Activated naive CD8-positive, alpha-beta T cell treated with anti-CD3 and anti-CD28 coated beads, Interleukin-2, amount 10 ng/mL, durations not matched to agents 7 days and 5 days (primary cell): ENCODE measurements at regions of chr12 and their contacts with region 1.

Region 1: DNA sequence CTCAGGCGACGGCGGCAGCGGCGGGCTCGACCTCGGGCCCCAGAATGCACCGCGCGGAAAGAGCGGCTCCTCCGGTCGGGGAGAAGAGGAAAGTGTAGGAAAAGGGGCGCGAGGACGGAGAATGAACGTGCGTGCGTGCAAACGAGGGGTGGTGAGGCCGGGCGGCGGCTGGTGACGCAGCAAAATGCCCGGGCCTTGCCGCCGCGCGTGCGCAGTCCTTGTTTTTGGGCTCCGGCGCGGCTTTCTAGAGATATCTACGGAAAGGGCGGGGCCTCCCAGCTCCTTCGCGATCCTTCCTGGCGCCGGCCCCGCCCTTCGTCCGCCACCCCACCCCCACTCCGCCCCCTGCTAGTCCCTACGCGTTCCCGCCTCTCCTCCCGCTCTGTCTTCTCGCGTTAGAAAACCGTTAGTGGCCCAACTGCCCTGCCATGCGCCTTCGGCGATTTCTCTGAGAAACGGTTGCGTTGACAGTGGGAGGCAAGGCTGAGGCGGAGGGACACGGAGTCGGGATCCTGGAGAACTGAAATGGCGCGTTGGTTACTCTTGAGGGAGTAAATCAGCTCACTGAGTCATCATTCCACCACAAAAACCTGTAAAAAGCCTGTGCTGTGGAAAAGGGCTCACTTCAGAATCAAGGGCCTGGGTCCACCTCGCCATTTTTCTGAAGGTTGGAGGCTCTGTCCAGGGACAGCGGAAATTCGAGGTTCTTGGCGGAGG is at the start of gene PTGES3:
- DNase-seq: peak; percentile 99
- ATAC-seq: peak; percentile 75
- H3K4me3 Mint-ChIP-seq: peak within 1 kb of the TSS; percentile 100
- H3K27ac Mint-ChIP-seq: peak within 1 kb of the TSS; percentile 98
- H3K4me1 Mint-ChIP-seq: peaks cover 23% of the 10 kb centered on the region
- H3K27me3 Mint-ChIP-seq: no peaks in the 10 kb centered on the region
- total RNA-seq, gene PTGES3: 210 to 217 TPM

Region 2: DNA sequence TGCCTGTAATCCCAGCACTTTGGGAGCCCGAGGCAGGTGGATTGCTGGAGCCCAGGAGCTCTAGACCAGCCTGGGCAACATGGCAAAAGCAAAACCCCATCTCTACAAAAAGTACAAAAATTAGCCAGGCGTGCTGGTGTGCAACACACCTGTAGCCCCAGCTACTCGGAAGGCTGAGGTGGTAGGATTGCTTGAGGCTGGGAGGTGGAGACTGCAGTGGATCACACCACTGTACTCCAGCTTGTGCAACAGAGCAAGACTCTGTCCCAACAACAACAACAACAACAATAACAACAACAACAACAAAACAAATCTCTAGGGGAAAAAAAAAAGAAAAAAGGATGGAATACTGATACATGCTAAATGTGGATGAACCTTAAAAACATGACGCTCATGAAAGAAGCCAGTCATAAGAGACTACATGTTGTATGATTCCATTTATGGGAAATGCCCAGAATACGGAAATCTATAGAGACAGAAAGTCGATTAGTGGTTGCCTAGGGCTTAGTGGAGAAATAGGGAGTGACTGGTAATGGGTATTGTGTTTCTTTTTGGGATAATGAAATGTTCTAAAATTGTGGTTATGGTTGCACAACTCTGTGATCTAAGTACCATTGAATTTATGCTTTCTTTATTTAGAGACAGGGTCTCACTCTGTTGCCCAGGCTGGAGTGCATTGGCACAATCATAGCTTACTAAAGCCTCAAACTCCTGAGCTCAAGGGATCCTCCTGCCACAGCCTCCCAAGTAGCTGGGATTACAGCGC is 158.8 kb before region 1 on chr12:
- POLR2A ChIA-PET with region 1: no interaction called
- DNase-seq: no peak
- ATAC-seq: no peak
- H3K4me3 Mint-ChIP-seq: no peak overlapping the region
- H3K27ac Mint-ChIP-seq: no peak overlapping the region
- H3K4me1 Mint-ChIP-seq: no peaks in the 10 kb centered on the region
- H3K27me3 Mint-ChIP-seq: no peaks in the 10 kb centered on the region

Region 3: DNA sequence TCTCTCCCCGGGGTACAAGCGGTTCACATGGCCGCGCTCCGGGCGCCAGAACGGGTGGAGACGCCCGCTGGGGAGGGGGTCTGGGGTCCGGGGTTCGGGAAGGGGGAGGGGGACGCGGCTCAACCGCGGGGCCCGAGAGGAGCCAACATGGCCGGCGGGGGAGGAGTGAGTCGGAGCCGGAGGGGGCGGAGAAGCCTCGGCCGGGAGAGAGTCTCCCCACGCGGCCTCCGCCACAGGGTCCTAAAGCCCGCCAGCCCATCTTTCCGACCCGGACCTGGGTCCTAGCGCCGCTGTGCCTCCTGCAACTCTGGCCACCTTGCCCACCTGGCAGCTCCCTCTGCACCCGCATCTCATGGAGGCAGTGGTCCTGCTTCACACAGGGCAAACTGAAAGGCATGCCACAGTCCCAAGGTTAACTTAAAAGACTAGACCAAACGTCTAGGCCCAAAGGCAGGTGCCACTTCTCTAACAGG is 58.1 kb before region 1 on chr12 and contains the start of gene BAZ2A:
- POLR2A ChIA-PET with region 1: interaction called, 52 read pairs
- DNase-seq: peak; percentile 88
- ATAC-seq: peak; percentile 70
- H3K4me3 Mint-ChIP-seq: peak within 1 kb of the TSS; percentile 84
- H3K27ac Mint-ChIP-seq: peak within 1 kb of the TSS; percentile 86
- H3K4me1 Mint-ChIP-seq: peaks cover 64% of the 10 kb centered on the region
- H3K27me3 Mint-ChIP-seq: no peaks in the 10 kb centered on the region
- total RNA-seq, gene BAZ2A: 139 to 145 TPM

Region 4: GRCh38 chr12:56636675-56637540 is 51.4 kb before region 1 on chr12:
- POLR2A ChIA-PET with region 1: interaction called, 52 read pairs
- DNase-seq: peak; percentile 92
- ATAC-seq: peak; percentile 65
- H3K4me3 Mint-ChIP-seq: peak overlapping the region; percentile 97
- H3K27ac Mint-ChIP-seq: peak overlapping the region; percentile 95
- H3K4me1 Mint-ChIP-seq: peaks cover 53% of the 10 kb centered on the region
- H3K27me3 Mint-ChIP-seq: no peaks in the 10 kb centered on the region

Region 5: GRCh38 chr12:56645717-56646446 is 42.4 kb before region 1 on chr12 and contains the start of gene ATP5F1B:
- POLR2A ChIA-PET with region 1: interaction called, 65 read pairs
- DNase-seq: peak; percentile 85
- ATAC-seq: peak; percentile 99
- H3K4me3 Mint-ChIP-seq: peak within 1 kb of the TSS; percentile 96
- H3K27ac Mint-ChIP-seq: peak within 1 kb of the TSS; percentile 99
- H3K4me1 Mint-ChIP-seq: peaks cover 28% of the 10 kb centered on the region
- H3K27me3 Mint-ChIP-seq: no peaks in the 10 kb centered on the region
- total RNA-seq, gene ATP5F1B: 468 to 471 TPM

Region 6: DNA sequence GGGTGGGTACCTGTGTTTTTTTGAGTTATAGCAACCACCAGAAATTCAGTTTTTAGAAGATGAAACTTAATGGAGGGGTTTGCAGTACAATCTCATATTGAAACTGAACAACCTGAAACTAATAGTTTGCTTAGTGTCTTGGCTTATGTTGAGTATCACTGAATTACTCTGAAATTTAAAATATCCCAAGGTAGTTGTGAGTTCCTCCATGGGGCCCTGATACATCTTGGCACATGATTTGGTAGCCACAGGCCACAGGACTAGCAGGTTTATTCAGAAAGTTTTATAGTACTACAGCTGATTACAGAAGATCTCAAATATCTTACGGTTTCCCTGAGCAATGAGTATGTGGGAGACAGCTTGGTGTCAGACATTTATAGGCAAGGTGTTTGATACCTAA is 10.6 kb before region 1 on chr12:
- POLR2A ChIA-PET with region 1: interaction called, 14 read pairs
- DNase-seq: no peak
- ATAC-seq: no peak
- H3K4me3 Mint-ChIP-seq: no peak overlapping the region
- H3K27ac Mint-ChIP-seq: no peak overlapping the region
- H3K4me1 Mint-ChIP-seq: peaks cover 32% of the 10 kb centered on the region
- H3K27me3 Mint-ChIP-seq: no peaks in the 10 kb centered on the region

Region 7: GRCh38 chr12:56724972-56725722 is 36.9 kb after region 1 on chr12 and contains the start of gene NACA:
- POLR2A ChIA-PET with region 1: interaction called, 105 read pairs
- DNase-seq: peak; percentile 92
- ATAC-seq: peak; percentile 96
- H3K4me3 Mint-ChIP-seq: peak within 1 kb of the TSS; percentile 97
- H3K27ac Mint-ChIP-seq: peak within 1 kb of the TSS; percentile 94
- H3K4me1 Mint-ChIP-seq: peaks cover 44% of the 10 kb centered on the region
- H3K27me3 Mint-ChIP-seq: no peaks in the 10 kb centered on the region
- total RNA-seq, gene NACA: 878 to 882 TPM

Region 8: DNA sequence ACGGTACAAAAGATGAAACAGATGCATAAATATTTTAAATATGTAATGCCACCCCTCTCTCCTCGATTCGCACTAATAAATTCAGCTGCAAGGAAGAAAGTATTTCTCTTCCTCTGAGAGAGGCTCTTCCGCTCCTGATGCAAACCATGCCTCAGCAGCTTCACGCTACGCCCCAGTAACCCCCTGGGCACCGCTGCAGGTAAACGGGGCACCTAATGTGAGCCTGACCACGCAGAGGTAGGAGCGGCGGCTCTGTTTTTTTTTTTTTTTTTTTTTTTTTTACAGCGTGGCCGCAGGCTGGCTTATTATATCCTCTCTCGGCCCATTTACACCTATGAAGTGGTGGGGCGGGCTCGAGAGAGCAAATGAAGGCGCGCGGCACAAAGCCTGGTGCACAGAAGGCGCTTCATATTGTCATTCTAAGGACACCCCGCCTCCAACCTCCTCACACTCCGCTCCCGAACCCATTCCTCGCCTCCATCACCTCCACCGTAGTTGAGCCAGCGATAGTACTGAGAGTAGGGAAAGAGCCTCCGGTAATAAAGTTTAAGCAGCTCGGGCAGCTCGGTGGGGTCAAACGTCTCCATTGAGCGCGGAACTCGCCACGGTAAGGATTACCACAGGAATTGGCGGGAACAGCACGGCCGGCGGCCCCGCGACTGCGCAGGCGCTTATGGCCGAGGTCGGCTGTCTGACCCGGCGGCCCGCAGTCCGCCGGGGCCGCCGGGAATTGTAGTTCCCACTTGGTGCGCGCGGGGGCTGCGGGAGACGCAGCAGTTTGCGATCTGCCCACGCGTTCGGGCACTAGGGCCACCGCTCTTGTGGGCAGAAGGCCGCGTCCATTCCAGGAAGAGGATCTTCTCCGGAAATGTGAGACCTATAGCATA is 63.7 kb after region 1 on chr12 and contains the start of gene PRIM1:
- POLR2A ChIA-PET with region 1: interaction called, 18 read pairs
- DNase-seq: peak; percentile 92
- ATAC-seq: peak; percentile 91
- H3K4me3 Mint-ChIP-seq: peak within 1 kb of the TSS; percentile 95
- H3K27ac Mint-ChIP-seq: peak within 1 kb of the TSS; percentile 96
- H3K4me1 Mint-ChIP-seq: peaks cover 34% of the 10 kb centered on the region
- H3K27me3 Mint-ChIP-seq: no peaks in the 10 kb centered on the region
- total RNA-seq, gene PRIM1: 52.5 to 56.1 TPM

Region 9: DNA sequence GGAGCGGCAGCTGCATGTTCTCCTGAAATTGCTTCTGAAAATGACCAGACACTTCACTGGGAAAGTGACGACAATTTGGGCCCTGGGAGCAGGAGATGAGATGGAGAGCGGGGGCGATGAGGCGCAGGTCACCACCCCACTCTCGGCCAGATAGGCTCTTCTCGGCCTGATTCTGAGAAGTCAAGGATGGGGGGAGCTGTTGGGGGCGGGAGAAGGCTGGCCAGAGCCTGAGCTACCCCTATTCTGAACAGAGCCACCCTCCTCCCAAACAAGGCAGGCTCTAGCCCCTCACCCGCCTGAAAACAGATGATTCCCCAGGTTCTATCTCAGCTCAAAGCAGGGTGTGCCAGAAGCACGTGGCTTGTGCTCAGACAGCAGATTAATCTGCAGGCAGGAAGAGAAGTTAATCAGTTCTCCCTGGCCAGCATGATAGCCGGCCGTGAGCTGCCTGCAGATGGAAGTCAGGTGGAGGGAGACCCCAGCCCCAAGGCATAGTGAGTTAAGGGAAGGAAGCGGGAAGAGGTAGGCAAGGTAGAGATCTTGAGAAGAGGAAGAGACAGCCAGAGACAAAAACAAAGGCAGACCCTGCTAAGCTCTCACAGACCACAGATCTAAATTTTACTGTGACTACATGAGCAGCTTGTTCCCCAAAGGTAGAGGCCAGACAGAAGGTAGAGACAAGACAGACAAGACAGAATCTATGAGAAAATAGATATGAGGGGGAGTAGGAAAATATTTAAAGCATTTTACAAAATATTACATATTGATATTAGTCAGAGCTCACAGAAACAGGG is 338.9 kb after region 1 on chr12:
- POLR2A ChIA-PET with region 1: no interaction called
- DNase-seq: no peak
- ATAC-seq: no peak
- H3K4me3 Mint-ChIP-seq: no peak overlapping the region
- H3K27ac Mint-ChIP-seq: peak overlapping the region; percentile 52
- H3K4me1 Mint-ChIP-seq: peaks cover 30% of the 10 kb centered on the region
- H3K27me3 Mint-ChIP-seq: no peaks in the 10 kb centered on the region